PC-3 (cell line): ENCODE measurements at regions of chr10 and their contacts with region 1.

Region 1: GRCh38 chr10:114631666-114632417 is 26.2 kb downstream of the ABLIM1 start:
- DNase-seq: no peak
- ATAC-seq: peak; percentile 25; the same call in 1 of the 2 replicates
- H3K4me3 ChIP-seq: peak overlapping the region; percentile 69
- H3K27ac ChIP-seq: no peak overlapping the region
- H3K4me1 ChIP-seq: peaks cover 44% of the 10 kb centered on the region
- H3K27me3 ChIP-seq: no peaks in the 10 kb centered on the region
- CTCF ChIP-seq: no peak

Region 2: DNA sequence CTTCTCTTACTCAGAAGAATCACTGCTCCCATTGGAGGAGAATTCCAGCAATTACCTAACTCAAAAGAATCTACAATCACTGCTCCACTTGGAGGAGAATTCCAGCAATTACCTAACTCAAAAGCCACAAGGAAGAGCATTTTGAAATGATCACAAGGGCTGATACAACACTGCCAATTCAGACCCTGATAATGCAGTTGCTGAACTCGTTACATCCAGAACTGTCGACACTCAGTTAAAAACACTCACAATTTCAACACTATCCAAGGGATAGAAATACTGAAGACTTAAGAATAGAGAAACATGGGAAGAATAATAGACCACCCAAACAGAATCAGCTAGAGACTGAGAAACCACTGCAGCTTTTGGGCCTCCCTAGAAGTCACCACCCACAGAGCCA is 255.3 kb before region 1 on chr10:
- CTCF ChIA-PET with region 1: no interaction called
- POLR2A ChIA-PET with region 1: no interaction called
- intact Hi-C with region 1: no loop called
- DNase-seq: no peak
- ATAC-seq: no peak
- H3K4me3 ChIP-seq: no peak overlapping the region
- H3K27ac ChIP-seq: no peak overlapping the region
- H3K4me1 ChIP-seq: peaks cover 18% of the 10 kb centered on the region
- H3K27me3 ChIP-seq: no peaks in the 10 kb centered on the region
- CTCF ChIP-seq: no peak

Region 3: DNA sequence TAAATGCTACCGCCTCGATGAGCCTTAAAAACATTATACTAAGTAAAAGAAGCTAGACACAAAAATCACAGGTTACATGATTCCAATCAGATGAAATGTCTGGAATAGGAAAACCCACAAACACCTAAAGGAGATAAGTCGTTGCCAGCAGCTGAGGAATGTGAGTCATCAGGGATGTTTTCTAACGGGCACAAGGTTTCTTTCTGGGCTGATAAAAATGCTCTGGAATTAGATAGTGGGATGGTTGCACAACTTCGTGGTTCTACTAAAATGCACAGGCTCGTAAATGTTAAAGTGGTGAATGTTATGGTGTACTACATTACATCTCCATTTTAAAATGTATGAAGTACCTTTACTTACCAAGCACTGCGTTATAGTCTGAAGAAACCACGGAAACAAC is 16.5 kb after region 1 on chr10:
- CTCF ChIA-PET with region 1: no interaction called
- POLR2A ChIA-PET with region 1: no interaction called
- intact Hi-C with region 1: loop called (anchors 2 kb)
- DNase-seq: peak; percentile 46
- ATAC-seq: peak; percentile 49
- H3K4me3 ChIP-seq: no peak overlapping the region
- H3K27ac ChIP-seq: no peak overlapping the region
- H3K4me1 ChIP-seq: peaks cover 22% of the 10 kb centered on the region
- H3K27me3 ChIP-seq: no peaks in the 10 kb centered on the region
- CTCF ChIP-seq: no peak

Region 4: GRCh38 chr10:114684085-114684821 is 52.4 kb after region 1 on chr10:
- CTCF ChIA-PET with region 1: no interaction called
- POLR2A ChIA-PET with region 1: no interaction called
- intact Hi-C with region 1: loop called (anchors 5 kb)
- DNase-seq: peak; percentile 43
- ATAC-seq: peak; percentile 82
- H3K4me3 ChIP-seq: peak overlapping the region; percentile 53; the same call in 1 of the 2 replicates
- H3K27ac ChIP-seq: peak overlapping the region; percentile 69
- H3K4me1 ChIP-seq: peaks cover 40% of the 10 kb centered on the region
- H3K27me3 ChIP-seq: no peaks in the 10 kb centered on the region
- CTCF ChIP-seq: no peak

Region 5: GRCh38 chr10:114694752-114695151 is 62.9 kb after region 1 on chr10:
- CTCF ChIA-PET with region 1: no interaction called
- POLR2A ChIA-PET with region 1: no interaction called
- intact Hi-C with region 1: loop called (anchors 5 kb)
- DNase-seq: peak; percentile 26
- ATAC-seq: no peak
- H3K4me3 ChIP-seq: no peak overlapping the region
- H3K27ac ChIP-seq: no peak overlapping the region
- H3K4me1 ChIP-seq: peaks cover 27% of the 10 kb centered on the region
- H3K27me3 ChIP-seq: no peaks in the 10 kb centered on the region
- CTCF ChIP-seq: peak; percentile 66